ENCODE measurements at regions of chr19 and their contacts with region 1.

Region 1: DNA sequence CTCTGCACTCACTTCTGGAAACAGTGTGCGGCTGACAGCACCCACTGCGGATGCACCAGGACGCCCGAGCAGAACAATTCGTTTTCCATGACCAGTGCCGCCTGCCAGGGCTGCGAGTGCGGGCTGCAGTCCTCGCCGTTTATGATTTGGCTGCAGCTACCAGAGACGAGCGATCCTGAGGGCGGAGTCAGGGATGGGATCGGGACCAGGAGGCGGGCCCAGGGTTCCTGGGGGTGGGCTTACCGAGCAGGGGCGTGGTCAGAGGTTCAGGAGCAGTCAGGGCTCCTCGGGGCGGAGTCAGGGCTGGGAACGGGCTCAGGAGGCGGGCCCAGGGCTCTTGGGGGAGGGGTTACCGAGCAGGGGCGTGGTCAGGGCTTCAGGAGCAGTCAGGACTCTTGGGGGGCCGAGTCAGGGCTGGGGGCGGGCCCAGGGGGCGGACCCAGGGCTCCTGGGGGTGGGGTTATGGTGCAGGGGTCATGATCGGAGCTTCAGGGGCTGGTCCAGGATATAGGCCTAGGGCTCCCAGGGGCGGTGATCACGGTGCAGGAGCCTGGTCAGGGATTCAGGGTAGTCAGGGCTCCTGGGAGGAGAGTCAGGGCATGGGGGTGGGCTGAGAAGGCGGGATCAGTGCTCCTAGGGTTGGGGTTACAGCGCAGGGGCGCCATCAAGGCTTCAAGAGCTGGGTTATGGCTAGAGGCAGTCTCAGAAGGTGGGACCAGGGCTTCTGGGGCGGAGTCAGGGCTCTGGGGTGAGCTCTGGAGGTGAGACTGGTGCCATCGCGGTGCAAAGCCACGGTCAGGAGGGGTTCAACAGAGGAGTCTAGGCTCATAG is 1.7 kb downstream of the KLK4 start:
- DNase-seq: peak; percentile 88
- CTCF ChIP-seq: no peak

Region 2: DNA sequence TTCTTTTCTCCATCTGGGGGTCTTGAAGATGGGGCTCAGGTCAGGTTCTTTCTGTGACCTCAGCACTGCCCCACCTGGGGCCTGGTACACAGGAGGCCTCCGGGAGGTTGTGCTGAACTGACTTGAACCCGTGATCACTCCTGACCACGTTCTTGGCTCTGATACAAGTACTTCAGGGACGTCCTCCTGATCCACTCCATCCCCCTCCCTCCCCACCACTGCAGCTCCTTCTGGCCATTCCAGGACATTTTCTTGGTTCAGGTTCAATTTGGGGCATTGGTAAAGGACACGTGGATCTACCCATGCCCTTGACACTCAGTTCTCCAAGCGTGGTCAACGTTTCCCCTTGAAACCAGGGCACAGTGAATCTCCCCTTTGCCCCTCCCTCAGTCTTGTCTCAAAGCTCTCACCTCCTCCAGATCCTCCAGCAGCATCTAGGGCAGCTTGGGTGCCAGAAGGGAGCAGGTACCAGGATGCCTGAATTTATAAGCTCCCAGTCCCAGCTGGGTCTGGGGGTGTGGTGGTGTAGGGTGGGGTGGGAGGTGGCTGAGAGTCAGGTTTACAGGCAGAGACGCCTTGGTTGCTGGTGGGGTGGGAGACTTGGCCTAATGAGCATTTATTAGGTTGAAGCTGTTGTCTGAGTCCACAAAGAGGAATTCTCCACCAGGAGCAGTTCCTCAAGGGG is 76.2 kb before region 1 on chr19 and contains the start of gene KLK15:
- CTCF ChIA-PET with region 1: no interaction called
- POLR2A ChIA-PET with region 1: no interaction called
- DNase-seq: no peak
- CTCF ChIP-seq: no peak

Region 3: DNA sequence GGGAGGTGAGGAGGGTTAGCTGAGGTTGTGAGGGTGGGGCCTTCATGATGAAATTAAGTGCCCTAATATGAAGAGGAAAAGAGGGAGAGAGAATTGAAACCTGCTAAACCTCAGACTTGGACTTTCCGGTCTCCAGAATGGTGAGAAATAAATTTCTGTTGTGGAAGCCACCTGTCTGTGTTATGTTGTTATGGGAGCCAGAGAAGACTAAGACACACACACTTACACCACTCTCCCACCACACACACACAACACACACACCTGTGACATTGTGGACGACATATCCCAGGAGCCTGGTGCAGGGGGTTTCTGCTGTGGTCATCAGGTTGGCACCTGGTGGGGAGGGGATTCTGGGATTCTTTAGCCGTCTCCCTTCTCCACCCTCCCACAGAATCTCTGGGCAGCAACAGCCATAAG is 12.3 kb before region 1 on chr19:
- CTCF ChIA-PET with region 1: interaction called, 15 read pairs
- POLR2A ChIA-PET with region 1: no interaction called
- DNase-seq: no peak
- CTCF ChIP-seq: no peak